Transverse colon (tissue), 4 donors: ENCODE measurements at regions of chr17 and their contacts with region 1.

Region 1: GRCh38 chr17:79612468-79613194 is 1.8 kb upstream of the RBFOX3 start:
- DNase-seq: peak; percentile 58
- H3K4me3 ChIP-seq: no peak overlapping the region
- H3K27ac ChIP-seq: peak overlapping the region in 2 of 4 donors; percentile 15 to 63
- H3K4me1 ChIP-seq: peaks cover 0 to 5% (median 0%) of the 10 kb centered on the region in 4 donors
- H3K27me3 ChIP-seq: peaks cover 80% of the 10 kb centered on the region
- CTCF ChIP-seq: peak; percentile 56 to 70 (median 64)
- EP300 ChIP-seq: no peak
- POLR2A ChIP-seq: no peak

Region 2: GRCh38 chr17:79413611-79414010 is 199.0 kb before region 1 on chr17:
- in situ Hi-C with region 1: no loop called
- intact Hi-C with region 1: loop called (anchors 10 kb)
- DNase-seq: no peak
- H3K4me3 ChIP-seq: no peak overlapping the region
- H3K27ac ChIP-seq: no peak overlapping the region
- H3K4me1 ChIP-seq: peaks cover 0 to 7% (median 3%) of the 10 kb centered on the region in 4 donors
- H3K27me3 ChIP-seq: peaks cover 13% of the 10 kb centered on the region
- CTCF ChIP-seq: no peak
- EP300 ChIP-seq: no peak
- POLR2A ChIP-seq: no peak

Region 3: DNA sequence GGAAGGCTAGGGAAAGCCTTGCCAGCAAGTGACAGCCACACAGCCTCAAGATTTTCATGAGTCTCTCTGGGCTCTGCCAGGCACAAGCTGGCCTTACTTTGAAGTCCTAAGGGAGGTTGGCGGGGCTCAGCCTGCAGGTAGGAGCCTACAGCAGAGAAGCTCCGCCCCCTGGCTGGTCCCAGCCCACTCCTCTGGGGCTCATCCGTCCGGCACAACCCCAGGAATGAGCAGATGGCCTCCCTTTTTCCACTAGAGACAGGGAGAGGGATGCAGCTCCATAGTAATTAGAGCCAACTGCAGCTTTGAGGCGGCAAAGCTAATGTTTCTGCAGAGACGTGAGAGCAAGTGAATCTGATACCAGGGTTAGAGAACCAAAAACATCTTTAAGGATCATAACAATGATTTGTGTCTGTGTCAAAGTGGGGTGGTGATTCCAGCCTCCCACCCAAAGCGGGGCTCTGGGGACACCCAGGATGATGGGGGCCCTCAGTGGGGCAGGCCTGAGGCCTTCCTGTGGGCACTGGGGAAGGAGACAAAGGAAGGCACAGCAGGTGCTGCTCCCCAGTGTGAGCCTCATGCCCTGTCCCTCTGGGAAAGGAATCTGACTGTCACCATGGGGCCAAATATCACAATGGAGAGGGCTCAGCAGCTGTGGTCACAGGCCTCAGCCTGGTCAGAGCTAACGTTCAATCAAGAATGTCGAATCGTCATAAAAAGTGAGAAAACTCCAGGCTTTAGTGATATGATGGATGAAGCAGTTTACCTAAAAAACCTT is 63.3 kb before region 1 on chr17:
- in situ Hi-C with region 1: loop called in 1 of 4 experiments (anchors 10 kb)
- intact Hi-C with region 1: no loop called
- DNase-seq: no peak
- H3K4me3 ChIP-seq: no peak overlapping the region
- H3K27ac ChIP-seq: no peak overlapping the region
- H3K4me1 ChIP-seq: no peaks in the 10 kb centered on the region
- H3K27me3 ChIP-seq: peaks cover under 1% of the 10 kb centered on the region
- CTCF ChIP-seq: no peak
- EP300 ChIP-seq: no peak
- POLR2A ChIP-seq: no peak

Region 4: DNA sequence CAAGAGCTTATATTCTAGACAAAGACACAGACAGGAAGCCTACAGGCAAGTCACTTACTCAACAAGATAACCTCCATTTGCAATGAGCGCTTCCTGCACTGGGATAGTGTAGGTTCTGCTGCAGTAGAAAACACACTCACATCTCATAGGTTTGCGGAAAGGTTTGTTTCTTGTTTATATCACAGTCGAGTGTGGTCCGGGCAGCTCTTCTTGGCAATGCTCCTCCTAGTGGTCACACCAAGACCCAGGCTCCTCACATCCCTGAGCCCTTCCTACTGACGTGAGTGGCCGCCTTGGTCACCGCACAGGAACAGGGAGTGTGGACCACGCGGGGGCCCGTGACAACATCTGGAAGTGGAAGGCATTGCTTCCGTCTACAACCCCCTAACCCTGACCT is 46.2 kb after region 1 on chr17:
- in situ Hi-C with region 1: no loop called
- intact Hi-C with region 1: loop called (anchors 5 kb)
- DNase-seq: peak; percentile 26
- H3K4me3 ChIP-seq: no peak overlapping the region
- H3K27ac ChIP-seq: peak overlapping the region in 3 of 4 donors; percentile 62 to 80 (median 74)
- H3K4me1 ChIP-seq: peaks cover 0 to 4% (median 3%) of the 10 kb centered on the region in 4 donors
- H3K27me3 ChIP-seq: peaks cover 8% of the 10 kb centered on the region
- CTCF ChIP-seq: peak; percentile 23 to 40 (median 32)
- EP300 ChIP-seq: no peak
- POLR2A ChIP-seq: no peak

Region 5: GRCh38 chr17:79707931-79708891 is 95.6 kb after region 1 on chr17:
- in situ Hi-C with region 1: no loop called
- intact Hi-C with region 1: loop called (anchors 10 kb)
- DNase-seq: peak; percentile 54
- H3K4me3 ChIP-seq: peak overlapping the region in 1 of 4 donors; percentile 15
- H3K27ac ChIP-seq: no peak overlapping the region
- H3K4me1 ChIP-seq: peaks cover 0 to 10% (median 2%) of the 10 kb centered on the region in 4 donors
- H3K27me3 ChIP-seq: no peaks in the 10 kb centered on the region
- CTCF ChIP-seq: peak; percentile 74 to 85 (median 78)
- EP300 ChIP-seq: no peak
- POLR2A ChIP-seq: no peak

Region 6: GRCh38 chr17:80364216-80364618 is 751.6 kb after region 1 on chr17:
- in situ Hi-C with region 1: no loop called
- intact Hi-C with region 1: no loop called
- DNase-seq: no peak
- H3K4me3 ChIP-seq: no peak overlapping the region
- H3K27ac ChIP-seq: no peak overlapping the region
- H3K4me1 ChIP-seq: no peaks in the 10 kb centered on the region
- H3K27me3 ChIP-seq: no peaks in the 10 kb centered on the region
- CTCF ChIP-seq: no peak
- EP300 ChIP-seq: no peak
- POLR2A ChIP-seq: no peak